HEK293T (cell line): ENCODE measurements at regions of chr7 and their contacts with region 1.

Region 1: GRCh38 chr7:73557108-73557396 is 438 bp downstream of the BCL7B start:
- DNase-seq: peak; percentile 95

Region 2: GRCh38 chr7:73522105-73522872 is 34.8 kb before region 1 on chr7 and contains the start of gene BAZ1B:
- CTCF ChIA-PET with region 1: interaction called, 3 read pairs
- POLR2A ChIA-PET with region 1: interaction called, 25 read pairs
- DNase-seq: peak; percentile 95

Region 3: GRCh38 chr7:73690646-73691045 is 133.6 kb after region 1 on chr7:
- CTCF ChIA-PET with region 1: no interaction called
- POLR2A ChIA-PET with region 1: no interaction called
- DNase-seq: no peak